ENCODE measurements at regions of chr7 and their contacts with region 1.

Region 1: GRCh38 chr7:158704704-158705468 is at the start of gene NCAPG2:
- DNase-seq: peak; percentile 94 to 98 (median 97)
- ATAC-seq: peak; percentile 99
- H3K4me3 ChIP-seq: peak within 1 kb of the TSS; percentile 88
- H3K4me3 Mint-ChIP-seq: peak within 1 kb of the TSS; percentile 66 to 88 (median 85)
- H3K27ac ChIP-seq: peak within 1 kb of the TSS; percentile 82
- H3K27ac Mint-ChIP-seq: peak within 1 kb of the TSS; percentile 46 to 91 (median 81)
- H3K4me1 ChIP-seq: peaks cover 12 to 15% of the 10 kb centered on the region in 2 donors
- H3K4me1 Mint-ChIP-seq: peaks cover 11 to 45% (median 15%) of the 10 kb centered on the region in 7 donors
- H3K27me3 ChIP-seq: no peaks in the 10 kb centered on the region
- H3K27me3 Mint-ChIP-seq: no peaks in the 10 kb centered on the region
- total RNA-seq, gene NCAPG2: 6.0 to 88.7 (median 8.8) TPM

Region 2: DNA sequence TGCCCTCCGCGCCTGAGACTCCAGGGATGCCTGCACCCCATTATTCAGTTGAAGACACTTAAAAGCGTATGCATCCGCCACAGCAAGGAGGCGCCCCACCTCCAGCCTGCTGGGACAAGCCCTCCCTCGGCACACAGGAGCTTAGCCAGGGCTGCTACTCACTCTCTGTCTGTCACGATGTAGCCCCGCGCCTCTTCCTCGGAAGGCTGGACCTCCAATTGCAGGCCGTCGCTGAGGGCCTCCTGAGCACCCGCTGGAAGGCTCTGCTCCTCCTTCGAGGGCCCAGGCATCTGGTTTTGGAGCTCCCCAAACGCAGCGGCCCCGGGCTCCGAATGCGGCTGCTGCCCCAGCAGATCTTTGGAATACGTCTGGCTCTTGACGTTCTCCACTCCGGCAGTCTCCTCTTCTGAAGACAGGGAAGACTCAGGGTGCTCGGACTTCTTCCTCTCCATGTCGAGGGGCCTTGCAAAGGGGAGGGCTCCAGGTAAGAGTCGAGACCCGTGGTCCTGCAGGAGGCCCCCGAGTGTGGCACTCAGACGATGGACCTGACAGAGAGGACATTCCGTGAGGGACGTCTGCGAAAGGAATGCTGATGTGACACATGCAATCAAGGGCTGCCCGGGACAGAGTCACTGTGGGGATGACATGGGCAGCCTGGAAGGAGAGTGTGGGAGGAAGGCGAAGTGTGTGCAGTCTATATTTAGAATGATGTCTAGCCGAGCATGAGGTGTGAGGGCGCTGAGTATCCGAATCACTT is 571.2 kb before region 1 on chr7:
- CTCF ChIA-PET with region 1: no interaction called
- POLR2A ChIA-PET with region 1: no interaction called
- intact Hi-C with region 1: no loop called
- DNase-seq: no peak
- ATAC-seq: no peak
- H3K4me3 ChIP-seq: no peak overlapping the region
- H3K4me3 Mint-ChIP-seq: no peak overlapping the region
- H3K27ac ChIP-seq: no peak overlapping the region
- H3K27ac Mint-ChIP-seq: no peak overlapping the region
- H3K4me1 ChIP-seq: no peaks in the 10 kb centered on the region
- H3K4me1 Mint-ChIP-seq: no peaks in the 10 kb centered on the region
- H3K27me3 ChIP-seq: no peaks in the 10 kb centered on the region
- H3K27me3 Mint-ChIP-seq: peaks cover 0 to 2% (median 0%) of the 10 kb centered on the region in 5 donors

Region 3: GRCh38 chr7:158655931-158656441 is 48.9 kb before region 1 on chr7:
- CTCF ChIA-PET with region 1: no interaction called
- POLR2A ChIA-PET with region 1: no interaction called
- intact Hi-C with region 1: loop called in 1 of 2 experiments (anchors 1 kb)
- DNase-seq: peak in 1 of 9 donors; percentile 51
- ATAC-seq: peak; percentile 51
- H3K4me3 ChIP-seq: no peak overlapping the region
- H3K4me3 Mint-ChIP-seq: peak overlapping the region in 1 of 10 donors; percentile 59
- H3K27ac ChIP-seq: no peak overlapping the region
- H3K27ac Mint-ChIP-seq: peak overlapping the region in 1 of 9 donors; percentile 86
- H3K4me1 ChIP-seq: no peaks in the 10 kb centered on the region
- H3K4me1 Mint-ChIP-seq: peaks cover 0 to 21% (median 0%) of the 10 kb centered on the region in 7 donors
- H3K27me3 ChIP-seq: no peaks in the 10 kb centered on the region
- H3K27me3 Mint-ChIP-seq: no peaks in the 10 kb centered on the region

Region 4: GRCh38 chr7:158774952-158775351 is 70.1 kb after region 1 on chr7:
- CTCF ChIA-PET with region 1: no interaction called
- POLR2A ChIA-PET with region 1: interaction called, 11 read pairs
- intact Hi-C with region 1: loop called in 1 of 2 experiments (anchors 2 kb)
- DNase-seq: no peak
- ATAC-seq: no peak
- H3K4me3 ChIP-seq: no peak overlapping the region
- H3K4me3 Mint-ChIP-seq: peak overlapping the region in 8 of 10 donors; percentile 45 to 75 (median 62)
- H3K27ac ChIP-seq: peak overlapping the region; percentile 11
- H3K27ac Mint-ChIP-seq: peak overlapping the region in 7 of 9 donors; percentile 64 to 94 (median 81)
- H3K4me1 ChIP-seq: peaks cover 8 to 58% of the 10 kb centered on the region in 2 donors
- H3K4me1 Mint-ChIP-seq: peaks cover 0 to 52% (median 30%) of the 10 kb centered on the region in 7 donors
- H3K27me3 ChIP-seq: no peaks in the 10 kb centered on the region
- H3K27me3 Mint-ChIP-seq: no peaks in the 10 kb centered on the region

Region 5: GRCh38 chr7:158856883-158857668 is 152.2 kb after region 1 on chr7:
- CTCF ChIA-PET with region 1: no interaction called
- POLR2A ChIA-PET with region 1: no interaction called
- intact Hi-C with region 1: loop called (anchors 1 kb)
- DNase-seq: peak in 2 of 9 donors; percentile 15 to 17
- ATAC-seq: no peak
- H3K4me3 ChIP-seq: peak overlapping the region; percentile 77
- H3K4me3 Mint-ChIP-seq: peak overlapping the region; percentile 67 to 98 (median 94)
- H3K27ac ChIP-seq: peak overlapping the region; percentile 83
- H3K27ac Mint-ChIP-seq: peak overlapping the region in 8 of 9 donors; percentile 24 to 92 (median 84)
- H3K4me1 ChIP-seq: peaks cover 0 to 22% of the 10 kb centered on the region in 2 donors
- H3K4me1 Mint-ChIP-seq: peaks cover 15 to 46% (median 39%) of the 10 kb centered on the region in 7 donors
- H3K27me3 ChIP-seq: no peaks in the 10 kb centered on the region
- H3K27me3 Mint-ChIP-seq: peaks cover 0 to 4% (median 0%) of the 10 kb centered on the region in 5 donors

Region 6: DNA sequence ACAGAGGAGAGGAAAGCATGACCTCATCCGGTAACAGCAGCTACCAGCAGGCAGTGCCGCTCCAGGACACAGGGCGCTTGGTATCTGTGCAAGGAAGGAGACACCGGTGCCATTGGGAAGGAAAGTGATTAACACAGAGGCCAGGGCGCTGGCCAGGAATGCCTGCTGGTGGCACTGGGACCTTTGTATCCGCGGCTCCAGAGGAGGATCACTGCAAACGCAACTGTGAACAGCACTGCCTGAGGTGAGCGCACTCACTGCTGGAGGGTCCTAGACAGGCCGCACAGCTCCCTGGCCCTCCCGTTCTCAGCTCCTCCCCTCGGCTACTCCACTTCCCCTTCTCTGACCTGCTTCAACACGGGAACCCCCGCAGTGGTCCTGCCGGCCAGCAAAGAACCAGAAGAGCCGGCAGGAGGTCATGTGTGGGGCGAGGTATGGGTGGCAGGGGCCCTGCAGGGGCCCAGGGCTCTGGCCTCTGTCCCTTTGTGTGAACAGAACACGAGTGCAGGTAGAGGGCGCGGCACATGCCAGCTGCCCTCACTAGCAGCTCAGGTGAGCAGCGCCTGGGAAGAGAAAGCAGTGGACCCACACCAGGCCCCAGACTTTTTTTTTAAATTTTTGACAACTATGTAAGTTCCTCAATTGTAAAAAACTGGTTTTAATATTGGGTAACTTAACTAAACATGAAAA is 332.2 kb after region 1 on chr7:
- CTCF ChIA-PET with region 1: no interaction called
- POLR2A ChIA-PET with region 1: no interaction called
- intact Hi-C with region 1: no loop called
- DNase-seq: no peak
- ATAC-seq: no peak
- H3K4me3 ChIP-seq: no peak overlapping the region
- H3K4me3 Mint-ChIP-seq: no peak overlapping the region
- H3K27ac ChIP-seq: no peak overlapping the region
- H3K27ac Mint-ChIP-seq: no peak overlapping the region
- H3K4me1 ChIP-seq: no peaks in the 10 kb centered on the region
- H3K4me1 Mint-ChIP-seq: peaks cover 0 to 5% (median 0%) of the 10 kb centered on the region in 7 donors
- H3K27me3 ChIP-seq: no peaks in the 10 kb centered on the region
- H3K27me3 Mint-ChIP-seq: peaks cover 0 to 17% (median 4%) of the 10 kb centered on the region in 5 donors